Aorta (tissue), 5 donors: ENCODE measurements at regions of chr11 and their contacts with region 1.

Region 1: GRCh38 chr11:34263440-34264172 is 94.2 kb downstream of the ABTB2 start:
- DNase-seq: peak; percentile 75 to 87
- ATAC-seq: peak; percentile 61
- H3K4me3 ChIP-seq: no peak overlapping the region
- H3K27ac ChIP-seq: no peak overlapping the region
- H3K4me1 ChIP-seq: no peaks in the 10 kb centered on the region
- H3K27me3 ChIP-seq: no peaks in the 10 kb centered on the region

Region 2: DNA sequence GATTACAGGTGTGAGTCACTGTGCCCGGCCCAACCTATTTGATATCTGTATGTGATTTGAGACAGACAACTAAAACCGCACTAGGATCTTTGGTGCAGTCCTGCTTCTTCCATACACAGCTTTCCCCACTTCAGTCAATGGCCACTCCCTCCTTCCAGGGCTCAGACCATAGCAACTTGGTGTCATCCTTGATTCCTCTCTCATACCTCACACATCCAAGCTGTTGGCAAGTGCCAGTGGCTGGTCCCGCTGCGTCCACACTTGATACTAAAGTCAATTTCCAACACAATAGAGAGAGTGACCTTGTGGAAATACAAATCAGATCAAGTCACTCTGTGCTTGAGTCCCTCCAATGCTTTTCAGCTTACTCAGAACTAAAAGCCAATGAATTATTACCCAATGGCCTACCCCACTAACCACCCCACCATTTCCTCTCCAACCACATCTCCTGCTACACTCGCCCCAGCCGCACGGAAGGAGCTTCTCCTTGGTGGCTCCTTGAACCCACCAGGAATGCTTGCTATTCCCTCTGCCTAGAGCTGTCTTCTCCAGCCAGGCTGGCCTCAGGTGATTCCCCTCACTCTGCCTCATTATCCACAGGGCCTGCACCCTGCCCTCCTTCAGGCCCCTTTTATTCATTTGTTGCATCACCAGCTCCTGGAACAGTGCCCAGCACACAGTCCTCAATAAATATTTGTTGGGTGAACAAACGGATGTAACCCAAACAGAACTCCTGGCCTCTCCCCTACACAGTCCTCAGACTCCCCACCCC is 81.3 kb after region 1 on chr11:
- intact Hi-C with region 1: loop called in 1 of 2 experiments (anchors 5 kb)
- DNase-seq: peak; percentile 66 to 80
- ATAC-seq: no peak
- H3K4me3 ChIP-seq: no peak overlapping the region
- H3K27ac ChIP-seq: peak overlapping the region; percentile 72 to 93
- H3K4me1 ChIP-seq: peaks cover 12 to 18% of the 10 kb centered on the region in 2 donors
- H3K27me3 ChIP-seq: no peaks in the 10 kb centered on the region